Spleen (tissue), 13 donors: ENCODE measurements at regions of chr6 and their contacts with region 1.

Region 1: GRCh38 chr6:90296346-90297114 is at the start of gene BACH2:
- DNase-seq: peak; percentile 96
- H3K4me3 ChIP-seq: peak within 1 kb of the TSS; percentile 64 to 78 (median 72)
- H3K27ac ChIP-seq: peak within 1 kb of the TSS; percentile 75 to 96 (median 90)
- H3K4me1 ChIP-seq: peaks cover 0 to 61% (median 31%) of the 10 kb centered on the region in 6 donors
- H3K27me3 ChIP-seq: peaks cover 0 to 52% (median 7%) of the 10 kb centered on the region in 7 donors
- CTCF ChIP-seq: peak in 5 of 11 experiments; percentile 38 to 53 (median 49)
- POLR2A ChIP-seq: peak in 2 of 3 donors; percentile 74 to 87
- total RNA-seq, gene BACH2: 18.1 to 53.8 (median 44.1) TPM

Region 2: DNA sequence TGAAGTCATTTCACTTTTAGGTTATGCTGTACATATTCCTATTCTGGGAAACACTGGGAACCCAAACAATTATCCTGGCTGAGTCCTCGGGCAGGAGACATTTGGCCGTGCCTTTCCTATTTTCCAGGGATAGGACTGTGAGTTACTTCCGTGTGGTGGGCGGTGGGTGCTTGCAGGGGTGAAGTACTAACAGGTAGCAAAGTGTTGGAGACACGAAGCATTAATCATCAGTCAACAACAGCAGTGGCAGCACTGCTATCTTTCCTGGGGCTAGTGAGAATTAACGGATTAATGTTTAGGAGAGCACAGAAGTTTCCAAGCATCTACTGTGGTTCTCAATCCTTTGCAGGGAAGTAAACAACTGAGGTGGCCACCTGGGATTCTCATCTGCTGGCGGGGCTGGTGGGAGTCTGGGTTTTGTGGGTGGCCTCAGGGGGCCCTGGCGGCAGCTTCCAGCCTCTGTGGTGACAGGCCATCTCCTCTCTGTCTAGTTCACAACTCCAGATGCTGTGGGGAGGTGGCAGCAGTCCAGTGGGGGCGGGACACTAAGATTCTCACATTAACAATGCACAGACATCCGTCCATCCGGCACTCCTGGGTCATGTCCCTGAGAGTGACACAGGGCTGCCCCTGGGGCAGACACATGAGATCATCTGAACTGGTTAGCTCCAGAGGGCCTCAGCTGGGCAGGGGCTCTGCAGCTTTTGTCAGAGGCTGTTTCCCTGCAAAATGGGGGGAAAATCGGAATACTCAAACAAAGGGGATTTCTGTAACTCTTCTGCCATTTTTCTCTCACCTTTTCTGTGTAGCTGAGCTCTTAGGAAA is 311.4 kb before region 1 on chr6:
- intact Hi-C with region 1: loop called (anchors 10 kb)
- DNase-seq: peak; percentile 83
- H3K4me3 ChIP-seq: no peak overlapping the region
- H3K27ac ChIP-seq: peak overlapping the region in 6 of 8 donors; percentile 13 to 56 (median 46)
- H3K4me1 ChIP-seq: peaks cover 0 to 27% (median 13%) of the 10 kb centered on the region in 6 donors
- H3K27me3 ChIP-seq: no peaks in the 10 kb centered on the region
- CTCF ChIP-seq: no peak
- POLR2A ChIP-seq: no peak

Region 3: DNA sequence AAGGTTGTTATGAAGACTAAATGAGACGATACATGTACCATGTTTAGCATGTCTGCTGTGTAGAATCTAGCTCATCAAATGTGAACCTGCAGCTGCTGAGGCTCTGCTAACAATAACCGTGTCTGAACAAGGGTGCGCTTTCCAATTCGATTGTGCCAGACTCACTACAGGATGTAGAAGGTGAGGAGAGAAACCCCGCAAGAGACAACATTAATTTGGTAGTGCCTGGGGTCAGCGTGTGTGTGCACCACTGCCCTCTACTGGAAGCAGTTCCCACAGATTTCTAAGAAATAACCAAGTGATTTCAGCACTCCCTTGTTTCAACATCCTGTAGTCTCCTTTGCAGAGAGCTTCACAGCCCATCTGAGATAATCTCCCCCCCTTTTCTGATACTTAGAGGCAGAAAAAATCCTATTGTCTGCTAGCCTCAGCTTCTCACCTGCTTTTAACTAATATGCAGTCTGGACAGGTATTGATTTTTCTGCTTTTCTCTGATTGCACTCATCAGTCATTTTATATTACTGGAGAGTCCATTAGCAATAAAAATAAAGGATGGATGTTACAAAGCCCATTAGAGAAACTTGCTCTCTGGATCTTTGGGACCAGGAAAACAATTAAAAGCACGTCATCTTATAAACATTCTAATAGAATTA is 96.8 kb after region 1 on chr6:
- intact Hi-C with region 1: loop called (anchors 5 kb)
- DNase-seq: peak; percentile 82
- H3K4me3 ChIP-seq: no peak overlapping the region
- H3K27ac ChIP-seq: peak overlapping the region in 1 of 8 donors; percentile 31
- H3K4me1 ChIP-seq: peaks cover 0 to 28% (median 17%) of the 10 kb centered on the region in 6 donors
- H3K27me3 ChIP-seq: no peaks in the 10 kb centered on the region
- CTCF ChIP-seq: peak; percentile 39 to 78 (median 73)
- POLR2A ChIP-seq: no peak

Region 4: DNA sequence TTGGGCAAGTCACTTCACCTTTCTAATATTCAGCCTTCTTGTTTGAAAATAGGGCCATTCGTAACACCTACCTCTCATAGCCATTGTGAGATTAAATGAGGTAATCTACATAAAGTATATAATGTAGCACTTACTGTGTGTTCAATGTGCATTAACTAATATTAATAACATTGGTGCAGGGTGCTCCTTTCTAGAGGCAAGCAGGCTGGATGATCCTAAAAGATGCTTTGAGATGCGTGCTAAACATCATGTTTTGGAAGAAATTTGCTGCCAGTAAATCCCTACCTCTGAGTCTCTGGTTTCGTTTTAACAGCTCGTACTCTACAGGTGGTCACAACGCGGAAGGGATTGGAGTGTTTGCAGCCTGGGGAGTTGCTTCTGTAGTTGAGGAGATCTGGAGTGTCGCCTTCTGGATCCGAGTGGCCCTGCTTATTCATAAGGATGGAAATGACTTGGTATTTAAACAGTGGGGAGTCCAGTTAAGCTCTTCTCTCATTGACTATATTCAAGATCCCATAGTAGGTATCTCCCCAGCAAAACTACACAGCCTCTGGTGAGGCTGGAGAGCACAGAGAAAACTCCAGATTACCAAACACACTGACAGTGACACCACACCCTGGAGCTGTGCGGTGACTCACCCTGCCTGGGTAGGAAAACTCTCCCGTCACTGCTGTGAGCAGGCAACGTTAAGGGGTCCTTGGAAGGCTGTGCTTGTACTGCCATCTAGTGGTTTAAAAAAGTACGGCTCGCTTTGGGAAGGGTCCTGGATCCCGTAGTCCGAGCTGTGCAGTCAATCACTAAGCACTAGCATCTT is 182.5 kb after region 1 on chr6:
- intact Hi-C with region 1: loop called (anchors 10 kb)
- DNase-seq: peak; percentile 88
- H3K4me3 ChIP-seq: no peak overlapping the region
- H3K27ac ChIP-seq: no peak overlapping the region
- H3K4me1 ChIP-seq: peaks cover 4 to 19% (median 11%) of the 10 kb centered on the region in 6 donors
- H3K27me3 ChIP-seq: no peaks in the 10 kb centered on the region
- CTCF ChIP-seq: peak; percentile 79 to 95 (median 89)
- POLR2A ChIP-seq: no peak